CD8-positive, alpha-beta T cell (primary cell): ENCODE measurements at regions of chr6 and their contacts with region 1.

Region 1: GRCh38 chr6:107847844-107848802 is 24.0 kb upstream of the SCML4 start:
- DNase-seq: peak; percentile 62 to 93 (median 79)
- ATAC-seq: peak; percentile 89
- H3K4me3 ChIP-seq: peak overlapping the region; percentile 54 to 62
- H3K4me3 Mint-ChIP-seq: peak overlapping the region; percentile 82
- H3K27ac ChIP-seq: peak overlapping the region in 1 of 2 experiments; percentile 43
- H3K27ac Mint-ChIP-seq: peak overlapping the region; percentile 85
- H3K4me1 ChIP-seq: peaks cover 14% of the 10 kb centered on the region
- H3K4me1 Mint-ChIP-seq: peaks cover 24% of the 10 kb centered on the region
- H3K27me3 ChIP-seq: no peaks in the 10 kb centered on the region
- H3K27me3 Mint-ChIP-seq: no peaks in the 10 kb centered on the region
- CTCF ChIP-seq: peak; percentile 97

Region 2: GRCh38 chr6:107413966-107414645 is 434.0 kb before region 1 on chr6:
- CTCF ChIA-PET with region 1: no interaction called
- POLR2A ChIA-PET with region 1: no interaction called
- intact Hi-C with region 1: no loop called
- DNase-seq: no peak
- ATAC-seq: no peak
- H3K4me3 ChIP-seq: no peak overlapping the region
- H3K4me3 Mint-ChIP-seq: no peak overlapping the region
- H3K27ac ChIP-seq: no peak overlapping the region
- H3K27ac Mint-ChIP-seq: no peak overlapping the region
- H3K4me1 ChIP-seq: no peaks in the 10 kb centered on the region
- H3K4me1 Mint-ChIP-seq: peaks cover 4% of the 10 kb centered on the region
- H3K27me3 ChIP-seq: no peaks in the 10 kb centered on the region
- H3K27me3 Mint-ChIP-seq: no peaks in the 10 kb centered on the region
- CTCF ChIP-seq: no peak

Region 3: GRCh38 chr6:107674995-107675738 is 173.0 kb before region 1 on chr6:
- CTCF ChIA-PET with region 1: interaction called, 51 read pairs
- POLR2A ChIA-PET with region 1: no interaction called
- intact Hi-C with region 1: loop called (anchors 1 kb)
- DNase-seq: peak; percentile 74 to 93 (median 90)
- ATAC-seq: peak; percentile 99
- H3K4me3 ChIP-seq: peak overlapping the region; percentile 9
- H3K4me3 Mint-ChIP-seq: peak overlapping the region; percentile 79
- H3K27ac ChIP-seq: peak overlapping the region; percentile 15 to 50
- H3K27ac Mint-ChIP-seq: peak overlapping the region; percentile 93
- H3K4me1 ChIP-seq: peaks cover 13% of the 10 kb centered on the region
- H3K4me1 Mint-ChIP-seq: peaks cover 15% of the 10 kb centered on the region
- H3K27me3 ChIP-seq: no peaks in the 10 kb centered on the region
- H3K27me3 Mint-ChIP-seq: no peaks in the 10 kb centered on the region
- CTCF ChIP-seq: peak; percentile 84

Region 4: GRCh38 chr6:107704347-107705013 is 143.6 kb before region 1 on chr6:
- CTCF ChIA-PET with region 1: interaction called, 64 read pairs
- POLR2A ChIA-PET with region 1: no interaction called
- intact Hi-C with region 1: no loop called
- DNase-seq: peak in 3 of 9 experiments; percentile 45 to 66 (median 57)
- ATAC-seq: peak; percentile 70
- H3K4me3 ChIP-seq: no peak overlapping the region
- H3K4me3 Mint-ChIP-seq: no peak overlapping the region
- H3K27ac ChIP-seq: peak overlapping the region in 1 of 2 experiments; percentile 32
- H3K27ac Mint-ChIP-seq: peak overlapping the region; percentile 80
- H3K4me1 ChIP-seq: peaks cover 9% of the 10 kb centered on the region
- H3K4me1 Mint-ChIP-seq: peaks cover 49% of the 10 kb centered on the region
- H3K27me3 ChIP-seq: no peaks in the 10 kb centered on the region
- H3K27me3 Mint-ChIP-seq: no peaks in the 10 kb centered on the region
- CTCF ChIP-seq: peak; percentile 77

Region 5: DNA sequence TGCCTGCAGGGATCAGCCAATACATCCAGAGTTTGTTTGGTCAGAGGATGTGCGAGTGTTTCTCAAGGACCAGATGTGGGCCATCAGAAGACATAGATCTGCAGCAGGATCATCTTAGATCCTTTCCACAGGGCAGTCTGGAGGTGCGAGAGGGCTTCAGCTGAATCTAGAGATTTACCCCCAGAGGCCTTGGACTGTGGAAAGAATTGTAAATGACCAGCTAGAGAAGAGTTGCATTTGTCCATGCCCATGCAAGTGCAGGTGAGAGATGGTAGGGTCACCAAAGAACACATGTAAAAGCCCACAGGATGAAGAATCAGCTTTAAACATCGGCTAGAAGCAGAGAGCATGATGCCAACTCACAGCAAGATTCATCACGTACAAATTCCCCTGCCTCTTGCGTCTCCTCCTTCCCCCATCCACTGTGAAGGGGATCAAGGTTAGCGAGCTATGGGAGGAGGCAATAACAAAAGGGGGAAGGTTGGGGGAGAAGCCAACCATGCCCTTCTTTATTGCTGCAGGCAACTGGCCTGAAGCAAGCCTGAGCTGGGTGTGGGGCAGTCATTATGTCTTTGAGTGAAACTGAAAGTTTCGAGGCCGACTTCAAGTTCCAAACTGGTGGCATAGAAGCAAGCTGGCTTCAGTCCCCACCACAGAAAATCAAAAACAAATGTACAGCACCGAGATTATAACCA is 107.5 kb before region 1 on chr6:
- CTCF ChIA-PET with region 1: interaction called, 246 read pairs
- POLR2A ChIA-PET with region 1: interaction called, 12 read pairs
- intact Hi-C with region 1: no loop called
- DNase-seq: peak in 3 of 9 experiments; percentile 39 to 65 (median 46)
- ATAC-seq: peak; percentile 15
- H3K4me3 ChIP-seq: peak overlapping the region; percentile 30 to 41
- H3K4me3 Mint-ChIP-seq: peak overlapping the region; percentile 83
- H3K27ac ChIP-seq: peak overlapping the region; percentile 50 to 83
- H3K27ac Mint-ChIP-seq: peak overlapping the region; percentile 97
- H3K4me1 ChIP-seq: peaks cover 70% of the 10 kb centered on the region
- H3K4me1 Mint-ChIP-seq: peaks cover 81% of the 10 kb centered on the region
- H3K27me3 ChIP-seq: no peaks in the 10 kb centered on the region
- H3K27me3 Mint-ChIP-seq: no peaks in the 10 kb centered on the region
- CTCF ChIP-seq: no peak

Region 6: GRCh38 chr6:107769053-107769658 is 79.0 kb before region 1 on chr6:
- CTCF ChIA-PET with region 1: interaction called, 11 read pairs
- POLR2A ChIA-PET with region 1: interaction called, 3 read pairs
- intact Hi-C with region 1: no loop called
- DNase-seq: no peak
- ATAC-seq: no peak
- H3K4me3 ChIP-seq: no peak overlapping the region
- H3K4me3 Mint-ChIP-seq: no peak overlapping the region
- H3K27ac ChIP-seq: no peak overlapping the region
- H3K27ac Mint-ChIP-seq: peak overlapping the region; percentile 10
- H3K4me1 ChIP-seq: peaks cover 16% of the 10 kb centered on the region
- H3K4me1 Mint-ChIP-seq: peaks cover 51% of the 10 kb centered on the region
- H3K27me3 ChIP-seq: no peaks in the 10 kb centered on the region
- H3K27me3 Mint-ChIP-seq: no peaks in the 10 kb centered on the region
- CTCF ChIP-seq: no peak

Region 7: DNA sequence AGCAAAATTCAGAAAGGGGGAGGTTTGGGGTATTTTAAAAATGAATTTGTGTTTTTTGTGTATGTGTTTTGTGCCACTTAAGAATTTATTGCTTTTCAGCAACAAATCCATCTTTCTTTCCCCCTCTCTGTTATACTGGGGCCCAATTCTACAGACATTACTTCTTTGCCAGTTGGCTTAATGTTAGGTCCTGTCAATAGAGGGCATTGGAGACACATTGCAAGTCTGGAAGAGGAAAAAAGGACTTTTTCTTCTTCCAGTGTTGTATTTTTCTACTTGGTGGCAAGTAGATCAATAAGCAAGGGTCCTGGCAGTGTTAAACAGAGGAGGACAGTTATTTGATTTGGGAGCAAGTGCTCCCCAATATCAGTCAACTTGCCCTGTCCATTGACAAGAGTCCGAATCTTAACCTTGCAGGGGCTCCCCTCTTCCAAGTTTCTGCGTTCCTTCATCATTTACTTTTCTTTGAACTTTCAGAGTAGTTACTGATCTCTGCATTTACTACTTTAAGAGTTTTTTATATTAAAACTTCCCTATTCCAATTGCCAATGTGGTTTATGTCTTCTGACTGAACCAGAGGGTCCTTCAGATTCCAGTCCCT is 47.5 kb before region 1 on chr6:
- CTCF ChIA-PET with region 1: interaction called, 14 read pairs
- POLR2A ChIA-PET with region 1: no interaction called
- intact Hi-C with region 1: loop called (anchors 1 kb)
- DNase-seq: peak in 2 of 9 experiments; percentile 43 to 60
- ATAC-seq: peak; percentile 47
- H3K4me3 ChIP-seq: no peak overlapping the region
- H3K4me3 Mint-ChIP-seq: no peak overlapping the region
- H3K27ac ChIP-seq: no peak overlapping the region
- H3K27ac Mint-ChIP-seq: peak overlapping the region; percentile 47
- H3K4me1 ChIP-seq: peaks cover 40% of the 10 kb centered on the region
- H3K4me1 Mint-ChIP-seq: peaks cover 65% of the 10 kb centered on the region
- H3K27me3 ChIP-seq: no peaks in the 10 kb centered on the region
- H3K27me3 Mint-ChIP-seq: no peaks in the 10 kb centered on the region
- CTCF ChIP-seq: peak; percentile 40

Region 8: DNA sequence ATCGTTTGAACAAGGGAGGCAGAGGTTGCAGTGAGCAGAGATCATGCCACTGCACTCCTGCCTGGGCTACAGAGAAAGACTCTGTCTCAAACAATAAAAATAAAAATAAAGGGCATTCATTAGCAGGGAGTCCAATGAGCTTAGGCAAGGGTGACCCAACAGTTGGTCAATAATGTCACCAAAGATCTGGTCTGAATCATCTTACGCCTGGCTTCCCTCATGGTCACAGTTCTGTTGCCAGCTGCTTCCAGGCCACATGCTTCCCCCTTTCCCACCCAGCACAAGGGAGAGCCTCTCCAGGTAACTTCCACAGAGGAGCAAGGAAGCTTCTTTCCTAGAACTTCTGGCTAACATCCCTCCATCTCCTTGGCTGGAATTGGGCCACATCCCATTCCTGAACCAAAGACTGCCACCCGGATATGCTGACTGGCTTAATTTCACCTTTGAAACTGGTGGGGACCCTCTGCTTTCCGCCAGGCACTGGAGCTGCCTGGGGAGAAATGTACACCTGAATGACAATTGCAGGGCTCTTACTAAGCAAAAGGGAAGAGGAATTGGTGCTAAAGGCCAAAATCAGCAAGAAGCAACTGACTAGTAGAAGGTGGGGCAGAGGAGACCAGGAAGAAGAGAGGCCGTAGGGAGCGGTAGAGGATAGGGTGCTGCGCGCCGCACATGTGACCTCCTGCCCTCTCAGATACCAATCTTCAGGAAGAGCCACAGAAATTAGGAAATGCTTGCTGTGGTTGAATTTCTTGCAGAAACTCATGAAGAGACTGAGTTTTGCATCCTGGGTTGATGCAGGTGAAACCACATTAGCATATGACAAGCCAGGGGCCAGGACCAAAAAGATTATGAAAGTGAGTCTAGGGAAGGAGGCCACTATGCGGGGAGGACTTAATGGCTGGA is 15.7 kb before region 1 on chr6:
- CTCF ChIA-PET with region 1: interaction called, 94 read pairs
- POLR2A ChIA-PET with region 1: interaction called, 3 read pairs
- intact Hi-C with region 1: loop called in 1 of 2 experiments (anchors 2 kb)
- DNase-seq: no peak
- ATAC-seq: no peak
- H3K4me3 ChIP-seq: no peak overlapping the region
- H3K4me3 Mint-ChIP-seq: no peak overlapping the region
- H3K27ac ChIP-seq: no peak overlapping the region
- H3K27ac Mint-ChIP-seq: no peak overlapping the region
- H3K4me1 ChIP-seq: peaks cover 15% of the 10 kb centered on the region
- H3K4me1 Mint-ChIP-seq: peaks cover 22% of the 10 kb centered on the region
- H3K27me3 ChIP-seq: no peaks in the 10 kb centered on the region
- H3K27me3 Mint-ChIP-seq: no peaks in the 10 kb centered on the region
- CTCF ChIP-seq: no peak

Region 9: GRCh38 chr6:108968325-108969316 is 1120.5 kb after region 1 on chr6:
- CTCF ChIA-PET with region 1: no interaction called
- POLR2A ChIA-PET with region 1: no interaction called
- intact Hi-C with region 1: no loop called
- DNase-seq: no peak
- ATAC-seq: no peak
- H3K4me3 ChIP-seq: no peak overlapping the region
- H3K4me3 Mint-ChIP-seq: no peak overlapping the region
- H3K27ac ChIP-seq: no peak overlapping the region
- H3K27ac Mint-ChIP-seq: no peak overlapping the region
- H3K4me1 ChIP-seq: peaks cover 7% of the 10 kb centered on the region
- H3K4me1 Mint-ChIP-seq: peaks cover 15% of the 10 kb centered on the region
- H3K27me3 ChIP-seq: no peaks in the 10 kb centered on the region
- H3K27me3 Mint-ChIP-seq: no peaks in the 10 kb centered on the region
- CTCF ChIP-seq: no peak